ENCODE measurements at regions of chr5 and their contacts with region 1.

Region 1: DNA sequence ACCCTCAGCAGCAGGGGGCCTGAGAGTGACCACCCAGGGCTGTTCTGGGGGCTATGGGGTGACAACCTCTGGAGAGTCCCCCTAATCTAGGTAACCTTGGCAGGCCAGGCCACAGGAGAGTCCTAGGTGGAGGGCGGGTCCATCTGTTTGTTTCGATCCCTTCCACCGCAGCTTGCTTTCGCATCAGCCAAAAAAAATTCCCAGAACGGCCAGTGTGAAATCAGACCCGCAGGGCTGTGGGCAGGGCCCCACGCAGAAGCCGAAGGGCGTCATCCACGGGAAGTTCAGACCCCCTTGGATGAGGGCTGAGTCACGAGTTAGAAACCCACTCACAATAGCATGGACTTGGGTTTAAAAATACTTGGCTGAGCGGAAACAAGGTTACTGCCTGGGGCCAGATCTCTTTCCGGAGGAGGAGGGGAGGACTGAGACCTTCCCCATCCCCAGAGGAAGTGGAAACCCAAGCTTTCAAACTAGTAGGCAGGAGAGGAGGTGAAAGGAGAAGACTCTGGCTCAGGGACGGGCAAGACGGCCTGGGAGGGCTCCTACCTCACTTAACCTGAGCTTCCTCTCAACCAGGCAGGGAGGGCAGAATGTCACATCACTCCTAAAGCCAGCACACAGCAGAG is 8.5 kb downstream of the STK10 start:
- DNase-seq: peak; percentile 67
- H3K4me3 Mint-ChIP-seq: peak overlapping the region; percentile 70
- H3K27ac Mint-ChIP-seq: peak overlapping the region; percentile 94
- H3K4me1 Mint-ChIP-seq: peaks cover 92% of the 10 kb centered on the region
- H3K27me3 Mint-ChIP-seq: no peaks in the 10 kb centered on the region

Region 2: GRCh38 chr5:170293273-170293672 is 1886.2 kb before region 1 on chr5:
- CTCF ChIA-PET with region 1: no interaction called
- intact Hi-C with region 1: loop called (anchors 10 kb)
- DNase-seq: peak; percentile 66
- H3K4me3 Mint-ChIP-seq: peak overlapping the region; percentile 95
- H3K27ac Mint-ChIP-seq: peak overlapping the region; percentile 98
- H3K4me1 Mint-ChIP-seq: peaks cover 69% of the 10 kb centered on the region
- H3K27me3 Mint-ChIP-seq: no peaks in the 10 kb centered on the region

Region 3: DNA sequence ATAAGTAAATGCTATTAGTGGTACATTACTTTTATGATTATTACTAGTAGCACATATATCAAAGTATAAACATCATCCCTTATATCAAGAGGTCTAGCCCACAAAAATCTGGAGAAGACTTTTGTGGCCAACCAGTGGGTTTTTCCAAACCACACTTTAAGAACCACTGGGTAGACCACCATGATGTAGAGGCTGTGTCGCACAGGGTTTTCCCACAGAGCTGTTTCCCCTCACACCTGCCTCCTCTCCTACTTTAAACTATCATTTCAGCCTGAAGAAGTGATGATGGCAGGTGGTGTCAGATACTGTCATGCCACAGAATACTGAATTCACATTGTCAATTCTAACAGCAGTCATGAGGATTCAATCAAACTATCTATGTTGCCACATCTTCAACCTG is 282.2 kb before region 1 on chr5:
- CTCF ChIA-PET with region 1: no interaction called
- intact Hi-C with region 1: no loop called
- DNase-seq: peak; percentile 34
- H3K4me3 Mint-ChIP-seq: no peak overlapping the region
- H3K27ac Mint-ChIP-seq: no peak overlapping the region
- H3K4me1 Mint-ChIP-seq: peaks cover 40% of the 10 kb centered on the region
- H3K27me3 Mint-ChIP-seq: no peaks in the 10 kb centered on the region

Region 4: DNA sequence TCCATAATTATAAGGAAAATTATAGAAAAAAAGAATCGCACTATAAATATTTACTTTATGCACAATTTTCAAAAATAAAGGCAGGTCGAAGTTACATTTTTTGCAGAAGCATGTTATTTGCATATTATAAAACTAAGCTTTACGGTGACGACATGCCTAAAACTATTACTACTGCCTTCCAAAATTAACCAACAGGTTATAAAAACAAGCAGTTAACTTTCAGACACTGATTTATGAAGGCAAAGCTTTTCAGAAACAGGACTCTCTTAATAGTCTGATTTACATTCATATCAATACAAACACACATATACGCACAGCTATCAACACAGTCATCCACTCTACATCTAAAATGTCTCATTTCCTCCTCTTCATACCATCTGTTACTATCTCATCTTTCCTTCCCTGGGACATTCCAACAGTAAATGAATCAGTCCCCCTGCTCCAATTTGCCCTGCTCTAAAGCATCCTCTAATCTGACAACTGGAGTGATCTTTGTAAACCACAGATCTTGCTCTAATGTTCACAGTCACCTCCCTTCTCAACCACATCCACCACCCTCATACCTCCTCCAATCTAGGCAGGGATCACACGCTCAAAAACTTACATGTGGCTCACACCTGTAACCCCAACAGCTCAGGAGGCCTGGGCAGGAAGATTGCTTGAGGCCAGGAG is 194.6 kb before region 1 on chr5:
- CTCF ChIA-PET with region 1: no interaction called
- intact Hi-C with region 1: loop called (anchors 5 kb)
- DNase-seq: peak; percentile 63
- H3K4me3 Mint-ChIP-seq: no peak overlapping the region
- H3K27ac Mint-ChIP-seq: peak overlapping the region; percentile 50
- H3K4me1 Mint-ChIP-seq: peaks cover 55% of the 10 kb centered on the region
- H3K27me3 Mint-ChIP-seq: no peaks in the 10 kb centered on the region

Region 5: DNA sequence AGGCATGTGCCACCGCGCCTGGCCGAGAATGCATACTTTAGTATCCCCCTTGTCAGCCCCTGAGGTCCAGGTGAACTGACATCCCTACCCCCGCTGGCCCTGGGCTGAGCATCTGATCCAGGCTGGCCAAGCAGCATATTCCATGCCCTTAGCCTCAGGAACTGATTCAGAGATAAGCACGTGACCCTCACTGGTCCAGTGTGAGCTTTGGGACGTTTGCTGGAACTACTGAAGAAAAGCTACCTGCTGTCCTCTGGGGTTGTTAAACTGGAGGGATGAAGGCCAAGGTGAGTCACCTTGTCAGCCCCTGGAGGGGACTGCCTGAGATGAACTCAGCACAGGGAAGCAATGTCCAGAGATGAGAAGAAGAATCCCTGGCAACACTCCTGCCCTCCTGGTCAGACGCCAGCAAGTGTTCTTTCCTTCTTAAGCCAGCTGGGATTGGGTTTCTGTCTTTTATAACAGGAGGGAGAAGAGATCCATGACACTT is 113.9 kb before region 1 on chr5:
- CTCF ChIA-PET with region 1: interaction called, 3 read pairs
- intact Hi-C with region 1: loop called (anchors 1 kb)
- DNase-seq: no peak
- H3K4me3 Mint-ChIP-seq: no peak overlapping the region
- H3K27ac Mint-ChIP-seq: no peak overlapping the region
- H3K4me1 Mint-ChIP-seq: peaks cover 56% of the 10 kb centered on the region
- H3K27me3 Mint-ChIP-seq: no peaks in the 10 kb centered on the region

Region 6: DNA sequence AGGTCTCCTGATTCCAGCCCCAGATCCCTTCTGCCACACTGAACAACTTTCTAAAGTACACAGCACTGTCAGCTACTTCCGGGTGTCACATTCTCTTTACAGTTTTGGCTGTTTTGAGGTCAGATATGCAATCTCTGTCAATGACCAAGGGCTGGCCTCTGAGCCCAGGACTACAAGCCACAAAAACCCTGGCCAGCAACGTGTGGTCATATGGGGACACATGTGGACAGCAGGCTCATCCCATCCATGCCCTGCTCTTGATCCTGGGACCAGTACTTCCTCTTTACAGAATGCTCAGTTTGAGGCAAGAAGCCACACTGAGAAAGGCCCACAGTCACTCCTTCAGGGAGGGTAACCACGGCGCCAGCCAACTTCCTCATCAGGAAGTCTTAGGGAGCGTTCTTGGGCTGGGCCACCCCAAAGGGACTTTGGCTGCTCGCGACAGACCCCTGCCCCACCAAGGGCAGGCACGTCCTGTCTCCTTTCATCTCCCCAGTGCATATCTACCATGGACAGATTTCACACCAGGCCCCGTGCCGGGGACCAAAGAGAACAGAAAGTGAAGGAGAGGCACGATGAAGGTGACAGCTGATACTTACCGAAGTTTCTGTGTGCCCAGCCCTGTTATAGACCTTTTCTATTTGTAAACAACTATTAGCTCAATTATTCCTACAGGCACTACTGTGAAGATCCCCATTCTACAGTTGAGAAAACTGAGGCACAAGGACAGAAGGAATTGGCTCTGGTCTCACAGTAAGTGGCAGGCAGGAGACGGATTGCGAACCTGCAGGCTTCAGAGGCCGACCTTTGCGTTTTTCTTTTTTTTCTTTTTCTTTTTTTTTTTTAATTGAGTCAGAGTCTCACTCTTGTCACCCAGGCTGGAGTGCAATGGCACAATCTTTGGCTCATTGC is 28.7 kb before region 1 on chr5:
- CTCF ChIA-PET with region 1: interaction called, 4 read pairs
- intact Hi-C with region 1: loop called (anchors 1 kb)
- DNase-seq: peak; percentile 38
- H3K4me3 Mint-ChIP-seq: peak overlapping the region; percentile 64
- H3K27ac Mint-ChIP-seq: peak overlapping the region; percentile 91
- H3K4me1 Mint-ChIP-seq: peaks cover 77% of the 10 kb centered on the region
- H3K27me3 Mint-ChIP-seq: no peaks in the 10 kb centered on the region

Region 7: GRCh38 chr5:172303572-172304335 is 124.3 kb after region 1 on chr5:
- CTCF ChIA-PET with region 1: no interaction called
- intact Hi-C with region 1: no loop called
- DNase-seq: no peak
- H3K4me3 Mint-ChIP-seq: no peak overlapping the region
- H3K27ac Mint-ChIP-seq: no peak overlapping the region
- H3K4me1 Mint-ChIP-seq: no peaks in the 10 kb centered on the region
- H3K27me3 Mint-ChIP-seq: peaks cover 3% of the 10 kb centered on the region

Region 8: GRCh38 chr5:173057062-173057924 is 877.8 kb after region 1 on chr5:
- CTCF ChIA-PET with region 1: no interaction called
- intact Hi-C with region 1: loop called (anchors 2 kb)
- DNase-seq: peak; percentile 100
- H3K4me3 Mint-ChIP-seq: peak overlapping the region; percentile 91
- H3K27ac Mint-ChIP-seq: peak overlapping the region; percentile 97
- H3K4me1 Mint-ChIP-seq: peaks cover 51% of the 10 kb centered on the region
- H3K27me3 Mint-ChIP-seq: no peaks in the 10 kb centered on the region